Colonic mucosa (tissue), 4 donors: ENCODE measurements at regions of chr13 and their contacts with region 1.

Region 1: GRCh38 chr13:49840266-49840665 is 47.8 kb upstream of the KPNA3 start:
- DNase-seq: no peak
- H3K4me3 ChIP-seq: no peak overlapping the region
- H3K27ac ChIP-seq: no peak overlapping the region
- H3K4me1 ChIP-seq: no peaks in the 10 kb centered on the region
- H3K27me3 ChIP-seq: no peaks in the 10 kb centered on the region
- CTCF ChIP-seq: no peak

Region 2: GRCh38 chr13:49652355-49653305 is 187.6 kb before region 1 on chr13:
- intact Hi-C with region 1: loop called (anchors 5 kb)
- DNase-seq: peak; percentile 44
- H3K4me3 ChIP-seq: no peak overlapping the region
- H3K27ac ChIP-seq: no peak overlapping the region
- H3K4me1 ChIP-seq: no peaks in the 10 kb centered on the region
- H3K27me3 ChIP-seq: no peaks in the 10 kb centered on the region
- CTCF ChIP-seq: peak; percentile 45

Region 3: DNA sequence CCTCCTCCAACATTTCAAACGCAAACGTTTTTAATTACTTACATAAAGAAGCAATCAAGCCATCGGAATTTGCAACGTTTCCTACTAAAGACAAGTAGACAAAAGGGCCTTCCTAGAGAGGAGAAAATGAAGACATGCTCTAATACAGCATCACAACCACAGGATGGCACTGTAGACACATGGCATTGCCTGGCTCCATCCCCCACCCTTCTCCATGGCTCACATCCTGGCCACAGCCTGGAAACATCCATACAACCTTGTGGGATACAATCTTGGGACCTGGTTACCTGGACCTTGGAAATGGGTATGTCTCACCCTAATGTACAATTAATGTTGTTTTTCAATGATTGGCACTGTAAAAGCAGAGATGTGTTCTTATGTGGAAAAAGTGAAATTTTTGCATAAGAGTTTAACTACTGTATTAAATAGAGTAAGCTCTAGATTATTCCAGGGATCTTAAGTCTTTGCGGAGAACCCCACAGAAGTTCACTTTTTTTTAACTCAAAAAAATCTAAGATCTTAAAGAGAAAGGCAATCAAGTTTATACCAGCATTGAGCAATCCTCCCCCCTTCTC is 170.4 kb before region 1 on chr13:
- intact Hi-C with region 1: loop called (anchors 5 kb)
- DNase-seq: peak; percentile 40
- H3K4me3 ChIP-seq: no peak overlapping the region
- H3K27ac ChIP-seq: no peak overlapping the region
- H3K4me1 ChIP-seq: no peaks in the 10 kb centered on the region
- H3K27me3 ChIP-seq: no peaks in the 10 kb centered on the region
- CTCF ChIP-seq: peak; percentile 63